ENCODE measurements at regions of chr12 and their contacts with region 1.

Region 1: GRCh38 chr12:75977952-75978671 is 53.5 kb downstream of the PHLDA1 start:
- DNase-seq: peak; percentile 63 to 91
- ATAC-seq: peak; percentile 88 to 98 (median 97)
- H3K4me3 ChIP-seq: no peak overlapping the region
- H3K4me3 Mint-ChIP-seq: peak overlapping the region; percentile 17
- H3K27ac ChIP-seq: peak overlapping the region; percentile 93
- H3K27ac Mint-ChIP-seq: peak overlapping the region; percentile 88 to 94
- H3K4me1 ChIP-seq: peaks cover 24% of the 10 kb centered on the region
- H3K4me1 Mint-ChIP-seq: peaks cover 22 to 31% of the 10 kb centered on the region in 2 donors
- H3K27me3 ChIP-seq: no peaks in the 10 kb centered on the region
- H3K27me3 Mint-ChIP-seq: no peaks in the 10 kb centered on the region
- CTCF ChIP-seq: no peak

Region 2: GRCh38 chr12:76020731-76021672 is 42.9 kb after region 1 on chr12:
- intact Hi-C with region 1: loop called (anchors 1 kb)
- DNase-seq: peak; percentile 63 to 87
- ATAC-seq: peak; percentile 74 to 86 (median 83)
- H3K4me3 ChIP-seq: no peak overlapping the region
- H3K4me3 Mint-ChIP-seq: peak overlapping the region; percentile 84
- H3K27ac ChIP-seq: peak overlapping the region; percentile 92
- H3K27ac Mint-ChIP-seq: peak overlapping the region; percentile 99 to 100
- H3K4me1 ChIP-seq: peaks cover 27% of the 10 kb centered on the region
- H3K4me1 Mint-ChIP-seq: peaks cover 36 to 37% of the 10 kb centered on the region in 2 donors
- H3K27me3 ChIP-seq: no peaks in the 10 kb centered on the region
- H3K27me3 Mint-ChIP-seq: no peaks in the 10 kb centered on the region
- CTCF ChIP-seq: no peak

Measured in natural killer cell (primary cell).